A673 (cell line): ENCODE measurements at regions of chr7 and their contacts with region 1.

Region 1: GRCh38 chr7:19939746-19940145 is 166.3 kb upstream of the TMEM196 start:
- DNase-seq: no peak
- H3K4me3 ChIP-seq: no peak overlapping the region
- H3K27ac ChIP-seq: no peak overlapping the region
- H3K4me1 ChIP-seq: no peaks in the 10 kb centered on the region
- H3K27me3 ChIP-seq: no peaks in the 10 kb centered on the region
- CTCF ChIP-seq: no peak

Region 2: GRCh38 chr7:19772841-19773760 is 166.6 kb before region 1 on chr7 and contains the start of gene TMEM196:
- CTCF ChIA-PET with region 1: no interaction called
- POLR2A ChIA-PET with region 1: interaction called, 13 read pairs
- intact Hi-C with region 1: no loop called
- DNase-seq: peak; percentile 21
- H3K4me3 ChIP-seq: no peak within 1 kb of the TSS
- H3K27ac ChIP-seq: no peak within 1 kb of the TSS
- H3K4me1 ChIP-seq: no peaks in the 10 kb centered on the region
- H3K27me3 ChIP-seq: peaks cover 72% of the 10 kb centered on the region
- CTCF ChIP-seq: no peak
- total RNA-seq, gene TMEM196: not detected in 2 replicates

Region 3: DNA sequence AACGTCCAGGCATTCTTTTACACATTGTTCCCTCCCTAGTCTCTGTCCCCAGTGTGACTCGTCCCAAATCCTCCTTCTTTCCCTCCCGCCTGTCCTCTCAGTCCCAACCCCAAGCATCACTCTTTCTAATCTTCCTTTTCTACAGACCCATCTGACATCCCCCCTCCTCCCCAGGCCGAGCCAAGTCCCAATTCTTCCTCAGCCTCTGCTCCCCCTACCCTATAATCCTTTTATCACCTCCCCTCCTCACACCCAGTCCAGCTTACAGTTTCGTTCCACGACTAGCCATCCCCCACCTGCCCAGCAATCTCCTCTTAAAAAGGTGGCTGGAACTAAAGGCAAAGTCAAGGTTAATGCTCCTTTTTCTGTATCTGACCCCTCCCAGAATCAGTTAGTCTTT is 182.3 kb after region 1 on chr7:
- CTCF ChIA-PET with region 1: no interaction called
- POLR2A ChIA-PET with region 1: no interaction called
- intact Hi-C with region 1: no loop called
- DNase-seq: no peak
- H3K4me3 ChIP-seq: no peak overlapping the region
- H3K27ac ChIP-seq: no peak overlapping the region
- H3K4me1 ChIP-seq: no peaks in the 10 kb centered on the region
- H3K27me3 ChIP-seq: peaks cover 13% of the 10 kb centered on the region
- CTCF ChIP-seq: no peak